Activated T-helper 1 cell treated with anti-CD3 and anti-CD28 coated beads, Interleukin-12 subunit alpha, Interleukin-12 subunit beta, Interleukin-2, Interleukin-4 antibody, amounts not matched to agents 30 ng/mL and 10 ng/mL and 1 ng/mL, durations not matched to agents 14 hours and 24 hours and 36 hours (primary cell): ENCODE measurements at regions of chr6 and their contacts with region 1.

Region 1: GRCh38 chr6:87742106-87742505 is 40.1 kb upstream of the AKIRIN2 start:
- DNase-seq: peak; percentile 43
- H3K4me3 Mint-ChIP-seq: no peak overlapping the region
- H3K27ac Mint-ChIP-seq: peak overlapping the region; percentile 27
- H3K4me1 Mint-ChIP-seq: peaks cover 43% of the 10 kb centered on the region
- H3K27me3 Mint-ChIP-seq: peaks cover 2% of the 10 kb centered on the region

Region 2: DNA sequence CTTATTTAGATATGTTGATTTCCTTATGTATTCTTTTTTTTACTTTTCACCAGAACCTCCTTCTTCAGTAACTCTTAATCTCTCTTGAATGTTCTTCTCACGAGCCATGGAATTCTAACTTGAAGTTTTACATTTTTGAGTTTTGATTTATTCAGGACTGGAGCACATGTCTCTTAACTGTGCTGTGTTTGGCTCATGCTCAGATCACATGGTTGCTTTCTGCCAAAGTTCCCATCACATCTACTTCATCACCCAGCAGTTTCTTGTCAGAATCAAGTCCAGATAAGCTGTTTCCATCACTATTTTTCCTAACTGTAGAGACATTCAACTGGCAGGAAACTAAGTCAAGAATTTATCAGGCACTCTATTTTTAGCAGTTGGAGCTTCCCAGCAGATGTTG is 237.7 kb before region 1 on chr6:
- intact Hi-C with region 1: no loop called
- DNase-seq: no peak
- H3K4me3 Mint-ChIP-seq: no peak overlapping the region
- H3K27ac Mint-ChIP-seq: no peak overlapping the region
- H3K4me1 Mint-ChIP-seq: no peaks in the 10 kb centered on the region
- H3K27me3 Mint-ChIP-seq: no peaks in the 10 kb centered on the region

Region 3: GRCh38 chr6:87618531-87618930 is 123.6 kb before region 1 on chr6:
- intact Hi-C with region 1: no loop called
- DNase-seq: no peak
- H3K4me3 Mint-ChIP-seq: no peak overlapping the region
- H3K27ac Mint-ChIP-seq: no peak overlapping the region
- H3K4me1 Mint-ChIP-seq: peaks cover 17% of the 10 kb centered on the region
- H3K27me3 Mint-ChIP-seq: no peaks in the 10 kb centered on the region

Region 4: GRCh38 chr6:87723170-87724078 is 18.7 kb before region 1 on chr6:
- intact Hi-C with region 1: loop called (anchors 2 kb)
- DNase-seq: no peak
- H3K4me3 Mint-ChIP-seq: no peak overlapping the region
- H3K27ac Mint-ChIP-seq: no peak overlapping the region
- H3K4me1 Mint-ChIP-seq: peaks cover 26% of the 10 kb centered on the region
- H3K27me3 Mint-ChIP-seq: peaks cover 3% of the 10 kb centered on the region

Region 5: GRCh38 chr6:87756858-87757257 is 14.8 kb after region 1 on chr6:
- intact Hi-C with region 1: loop called (anchors 2 kb)
- DNase-seq: no peak
- H3K4me3 Mint-ChIP-seq: no peak overlapping the region
- H3K27ac Mint-ChIP-seq: peak overlapping the region; percentile 42
- H3K4me1 Mint-ChIP-seq: peaks cover 17% of the 10 kb centered on the region
- H3K27me3 Mint-ChIP-seq: peaks cover 8% of the 10 kb centered on the region

Region 6: GRCh38 chr6:87808005-87808757 is 66.1 kb after region 1 on chr6:
- intact Hi-C with region 1: loop called (anchors 1 kb)
- DNase-seq: no peak
- H3K4me3 Mint-ChIP-seq: no peak overlapping the region
- H3K27ac Mint-ChIP-seq: peak overlapping the region; percentile 36
- H3K4me1 Mint-ChIP-seq: peaks cover 8% of the 10 kb centered on the region
- H3K27me3 Mint-ChIP-seq: no peaks in the 10 kb centered on the region

Region 7: DNA sequence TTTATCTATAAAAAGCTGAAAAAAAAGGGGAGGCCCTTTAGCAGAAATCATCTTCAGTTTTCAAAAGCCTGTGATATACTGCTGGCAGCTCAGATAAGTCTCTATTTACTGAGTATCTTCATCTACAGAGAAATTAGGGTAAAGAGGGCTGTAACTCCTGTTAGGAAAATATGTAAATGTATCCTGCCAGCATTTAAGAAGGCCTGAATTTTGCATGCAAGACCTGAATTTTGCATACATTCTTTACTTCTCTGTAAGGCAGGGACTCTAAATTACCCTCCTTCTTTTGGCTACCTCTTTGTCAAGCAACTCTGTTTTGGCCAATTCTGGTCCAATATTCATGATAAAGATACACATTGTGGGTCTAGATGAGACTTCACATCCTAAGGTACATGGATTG is 154.9 kb after region 1 on chr6:
- intact Hi-C with region 1: no loop called
- DNase-seq: no peak
- H3K4me3 Mint-ChIP-seq: no peak overlapping the region
- H3K27ac Mint-ChIP-seq: no peak overlapping the region
- H3K4me1 Mint-ChIP-seq: no peaks in the 10 kb centered on the region
- H3K27me3 Mint-ChIP-seq: peaks cover 11% of the 10 kb centered on the region

Region 8: DNA sequence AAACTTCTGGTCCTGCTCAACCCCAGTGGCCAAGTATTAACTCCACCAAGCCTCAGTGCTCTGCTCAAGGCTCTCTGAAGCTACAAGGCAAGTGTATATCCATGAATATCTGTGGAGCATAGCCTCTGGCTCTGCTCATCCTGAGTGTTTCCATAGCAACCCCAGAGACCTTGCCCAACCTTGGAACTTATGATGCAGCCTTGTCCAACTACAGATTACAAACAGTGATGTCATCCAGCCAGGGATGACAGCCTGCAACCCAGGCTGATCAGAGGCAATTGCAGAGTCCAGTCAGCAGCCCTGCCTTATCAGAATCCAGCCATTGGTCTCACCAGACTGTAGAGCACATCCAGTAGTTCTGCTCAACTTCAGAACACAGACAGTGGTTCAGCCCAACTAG is 240.0 kb after region 1 on chr6:
- intact Hi-C with region 1: no loop called
- DNase-seq: no peak
- H3K4me3 Mint-ChIP-seq: no peak overlapping the region
- H3K27ac Mint-ChIP-seq: no peak overlapping the region
- H3K4me1 Mint-ChIP-seq: no peaks in the 10 kb centered on the region
- H3K27me3 Mint-ChIP-seq: no peaks in the 10 kb centered on the region